PC-9 (cell line): ENCODE measurements at regions of chr19 and their contacts with region 1.

Region 1: DNA sequence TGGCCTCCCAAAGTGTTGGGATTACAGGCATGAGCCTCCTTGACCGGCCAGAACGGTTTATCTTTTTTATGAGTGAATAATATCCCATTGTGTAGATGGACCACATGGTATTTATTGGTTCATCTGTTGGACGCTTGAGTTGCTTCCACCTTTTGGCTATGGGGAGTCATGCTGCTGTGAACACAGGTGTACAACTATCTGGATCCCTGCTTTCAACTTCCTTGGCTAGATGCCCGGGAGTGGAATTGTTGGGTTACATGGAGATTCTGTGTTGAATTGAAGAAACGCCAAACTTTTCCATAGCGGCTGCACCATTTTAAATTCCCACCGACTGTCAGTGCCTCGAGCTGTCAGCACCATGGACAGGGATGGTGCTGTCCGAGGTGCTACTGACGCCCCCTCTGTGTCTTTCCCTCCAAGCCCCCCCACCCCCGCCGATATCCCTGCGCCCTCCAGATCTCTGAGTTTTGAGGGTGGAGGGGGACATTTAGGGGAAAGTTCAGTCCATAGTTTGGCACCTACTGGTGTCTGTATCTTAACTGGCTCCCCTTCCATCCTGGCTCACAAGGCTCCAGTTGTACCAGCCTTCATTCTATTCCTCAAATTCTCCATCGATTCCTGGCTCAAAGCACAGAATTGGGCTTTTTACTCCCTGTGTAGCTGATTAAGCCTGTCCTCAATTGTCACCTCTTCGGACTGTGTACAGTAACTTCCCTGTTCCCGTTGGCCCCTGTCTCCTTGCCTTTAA is 27.3 kb downstream of the PNPLA6 start:
- DNase-seq: no peak
- H3K4me3 ChIP-seq: no peak overlapping the region
- H3K27ac ChIP-seq: no peak overlapping the region
- H3K4me1 ChIP-seq: no peaks in the 10 kb centered on the region
- H3K27me3 ChIP-seq: no peaks in the 10 kb centered on the region
- CTCF ChIP-seq: no peak

Region 2: DNA sequence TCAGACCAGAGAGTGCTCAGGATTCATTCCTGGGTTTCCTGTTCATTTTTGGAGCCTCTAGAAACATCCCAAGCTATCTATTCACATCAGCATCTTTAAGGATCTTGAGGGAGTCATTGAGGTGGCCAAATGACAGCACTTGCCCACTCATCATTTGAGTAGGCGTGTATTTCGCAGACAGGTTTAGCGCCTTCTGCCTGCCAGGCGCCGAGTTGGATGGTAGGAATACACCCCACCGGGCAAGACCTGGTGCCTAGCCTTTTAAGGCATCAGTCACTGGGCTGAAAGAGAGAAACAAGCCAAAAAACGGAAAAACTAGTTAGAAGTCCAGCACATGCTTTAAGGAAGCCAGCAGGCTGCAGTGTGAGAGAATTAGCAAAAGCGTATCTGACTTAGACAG is 107.8 kb before region 1 on chr19:
- CTCF ChIA-PET with region 1: no interaction called
- POLR2A ChIA-PET with region 1: no interaction called
- intact Hi-C with region 1: no loop called
- DNase-seq: no peak
- H3K4me3 ChIP-seq: no peak overlapping the region
- H3K27ac ChIP-seq: no peak overlapping the region
- H3K4me1 ChIP-seq: peaks cover 17% of the 10 kb centered on the region
- H3K27me3 ChIP-seq: no peaks in the 10 kb centered on the region
- CTCF ChIP-seq: no peak

Region 3: DNA sequence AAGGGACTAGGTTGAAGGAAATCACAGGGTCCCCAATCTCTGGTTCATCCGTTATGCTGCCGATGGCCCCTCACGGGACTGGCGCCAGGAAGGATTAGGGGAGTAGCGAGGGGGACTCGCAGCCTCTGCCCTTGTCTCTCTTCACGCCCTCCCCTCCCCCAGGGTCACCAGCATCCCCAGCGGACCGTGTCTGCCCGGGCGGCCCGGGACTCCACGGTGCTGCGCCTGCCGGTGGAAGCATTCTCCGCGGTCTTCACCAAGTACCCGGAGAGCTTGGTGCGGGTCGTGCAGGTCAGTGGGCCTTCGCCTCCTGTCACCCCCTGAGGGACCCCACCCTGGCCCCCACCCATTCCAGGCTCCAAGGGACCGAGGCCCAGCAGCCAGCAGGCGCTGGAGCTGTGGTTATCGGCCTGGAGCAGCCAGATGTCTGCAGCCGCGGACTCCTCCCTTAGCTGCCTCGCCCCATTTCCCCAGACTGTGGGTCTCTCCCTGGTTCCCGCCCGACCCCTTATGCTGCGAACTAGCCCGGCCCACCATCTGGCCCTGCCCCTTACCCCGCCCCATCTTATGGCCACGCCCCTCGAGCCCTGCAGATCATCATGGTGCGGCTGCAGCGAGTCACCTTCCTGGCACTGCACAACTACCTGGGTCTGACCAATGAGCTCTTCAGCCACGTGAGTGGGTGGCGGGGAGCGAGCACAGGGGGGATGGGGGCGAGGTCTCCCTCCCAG is 21.9 kb before region 1 on chr19:
- CTCF ChIA-PET with region 1: interaction called, 3 read pairs
- POLR2A ChIA-PET with region 1: interaction called, 11 read pairs
- intact Hi-C with region 1: no loop called
- DNase-seq: no peak
- H3K4me3 ChIP-seq: no peak overlapping the region
- H3K27ac ChIP-seq: no peak overlapping the region
- H3K4me1 ChIP-seq: no peaks in the 10 kb centered on the region
- H3K27me3 ChIP-seq: no peaks in the 10 kb centered on the region
- CTCF ChIP-seq: no peak

Region 4: DNA sequence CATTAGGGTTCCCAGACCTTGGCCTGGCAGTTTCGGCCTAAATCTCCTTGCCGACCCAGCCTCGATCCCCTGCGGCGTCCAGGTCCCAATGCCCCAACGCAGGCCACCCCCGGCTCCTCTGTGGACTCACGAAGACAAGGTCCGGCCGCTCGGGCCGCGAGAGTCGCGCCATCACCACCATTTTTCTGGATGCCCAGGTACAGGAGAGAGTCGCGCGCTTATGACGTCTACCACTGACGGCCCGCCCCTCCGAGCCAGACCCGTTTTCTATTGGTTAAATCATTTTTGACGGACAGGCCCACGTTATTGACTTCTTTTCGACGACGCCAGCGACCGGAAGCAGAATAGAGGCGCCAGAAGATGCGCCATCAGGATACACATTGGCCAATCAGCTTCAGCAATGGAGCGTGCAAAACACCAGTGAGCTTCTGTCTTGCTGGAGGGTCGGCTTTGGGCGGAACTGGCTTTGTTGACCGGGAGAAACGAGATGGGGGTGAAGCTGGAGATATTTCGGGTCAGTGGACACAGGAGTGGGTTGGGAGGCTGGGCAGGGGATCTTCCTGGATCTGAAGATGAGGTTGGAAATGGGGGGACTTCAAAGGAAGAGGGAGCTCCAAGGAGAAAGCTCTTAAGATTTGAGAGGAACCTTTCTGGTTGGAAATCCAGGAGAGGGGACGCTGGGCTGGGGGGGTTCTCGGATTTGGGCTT is 66.7 kb after region 1 on chr19 and contains the starts of genes PET100 and XAB2:
- CTCF ChIA-PET with region 1: interaction called, 11 read pairs
- POLR2A ChIA-PET with region 1: no interaction called
- intact Hi-C with region 1: no loop called
- DNase-seq: peak; percentile 95 to 98
- H3K4me3 ChIP-seq: peak within 1 kb of the TSS; percentile 92
- H3K27ac ChIP-seq: peak within 1 kb of the TSS; percentile 45
- H3K4me1 ChIP-seq: peaks cover 18% of the 10 kb centered on the region
- H3K27me3 ChIP-seq: no peaks in the 10 kb centered on the region
- CTCF ChIP-seq: no peak
- total RNA-seq, gene PET100: 149 and 222 TPM in 2 replicates
- total RNA-seq, gene XAB2: 44.9 and 51.3 TPM in 2 replicates

Region 5: DNA sequence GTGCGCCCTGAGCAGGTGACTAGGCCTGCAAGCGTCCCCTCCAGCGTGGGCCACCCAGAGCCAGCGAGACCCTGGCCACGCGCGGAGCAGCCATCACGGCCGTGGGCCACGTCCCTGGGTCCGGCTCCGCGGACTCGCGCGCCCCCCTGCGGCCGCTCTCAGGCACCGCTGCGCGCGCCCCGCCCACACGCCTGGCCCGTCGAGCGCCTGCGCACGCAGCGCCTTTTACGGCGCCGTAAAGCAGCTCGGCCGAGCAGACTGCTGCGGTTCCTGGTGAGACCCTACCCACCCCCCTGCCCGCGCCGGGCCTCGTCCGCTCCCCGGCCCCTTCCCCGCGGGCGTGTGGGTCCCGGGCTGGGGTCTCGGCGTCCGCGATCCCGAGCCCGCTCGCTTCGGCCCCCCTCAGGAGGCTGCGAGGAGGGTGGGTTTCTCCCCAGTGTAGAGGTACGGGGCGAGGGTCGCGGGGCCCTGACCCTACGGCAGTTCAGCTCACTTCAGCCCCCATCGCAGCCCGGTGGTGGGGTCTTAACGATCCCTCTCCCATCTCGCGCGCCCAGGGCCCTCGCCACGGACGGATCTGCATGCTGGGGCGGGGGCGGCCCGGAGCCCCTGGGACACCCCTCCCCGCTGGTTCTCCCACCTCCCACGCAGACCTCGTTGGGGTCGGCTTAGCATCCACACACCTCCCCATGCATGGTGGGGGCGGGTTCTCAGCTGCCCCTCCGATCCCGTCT is 118.0 kb after region 1 on chr19 and contains the start of gene TRAPPC5:
- CTCF ChIA-PET with region 1: interaction called, 19 read pairs
- POLR2A ChIA-PET with region 1: no interaction called
- intact Hi-C with region 1: no loop called
- DNase-seq: peak; percentile 65 to 82
- H3K4me3 ChIP-seq: peak within 1 kb of the TSS; percentile 91
- H3K27ac ChIP-seq: peak within 1 kb of the TSS; percentile 32; the same call in 1 of the 2 replicates
- H3K4me1 ChIP-seq: peaks cover 21% of the 10 kb centered on the region
- H3K27me3 ChIP-seq: peaks cover 24% of the 10 kb centered on the region
- CTCF ChIP-seq: peak; percentile 89
- total RNA-seq, gene TRAPPC5: 81.2 and 103 TPM in 2 replicates